ENCODE measurements at regions of chr12 and their contacts with region 1.

Region 1: GRCh38 chr12:19439059-19440018 is at the start of gene AEBP2:
- DNase-seq: peak; percentile 79 to 97 (median 94)
- ATAC-seq: peak; percentile 96
- H3K4me3 ChIP-seq: peak within 1 kb of the TSS; percentile 59
- H3K4me3 Mint-ChIP-seq: peak within 1 kb of the TSS; percentile 91 to 100 (median 99)
- H3K27ac ChIP-seq: peak within 1 kb of the TSS; percentile 88
- H3K27ac Mint-ChIP-seq: peak within 1 kb of the TSS; percentile 82 to 98 (median 96)
- H3K4me1 ChIP-seq: peaks cover 23 to 35% of the 10 kb centered on the region in 2 donors
- H3K4me1 Mint-ChIP-seq: peaks cover 19 to 52% (median 49%) of the 10 kb centered on the region in 7 donors
- H3K27me3 ChIP-seq: no peaks in the 10 kb centered on the region
- H3K27me3 Mint-ChIP-seq: no peaks in the 10 kb centered on the region
- total RNA-seq, gene AEBP2: 49.2 to 58.7 (median 57.5) TPM

Region 2: DNA sequence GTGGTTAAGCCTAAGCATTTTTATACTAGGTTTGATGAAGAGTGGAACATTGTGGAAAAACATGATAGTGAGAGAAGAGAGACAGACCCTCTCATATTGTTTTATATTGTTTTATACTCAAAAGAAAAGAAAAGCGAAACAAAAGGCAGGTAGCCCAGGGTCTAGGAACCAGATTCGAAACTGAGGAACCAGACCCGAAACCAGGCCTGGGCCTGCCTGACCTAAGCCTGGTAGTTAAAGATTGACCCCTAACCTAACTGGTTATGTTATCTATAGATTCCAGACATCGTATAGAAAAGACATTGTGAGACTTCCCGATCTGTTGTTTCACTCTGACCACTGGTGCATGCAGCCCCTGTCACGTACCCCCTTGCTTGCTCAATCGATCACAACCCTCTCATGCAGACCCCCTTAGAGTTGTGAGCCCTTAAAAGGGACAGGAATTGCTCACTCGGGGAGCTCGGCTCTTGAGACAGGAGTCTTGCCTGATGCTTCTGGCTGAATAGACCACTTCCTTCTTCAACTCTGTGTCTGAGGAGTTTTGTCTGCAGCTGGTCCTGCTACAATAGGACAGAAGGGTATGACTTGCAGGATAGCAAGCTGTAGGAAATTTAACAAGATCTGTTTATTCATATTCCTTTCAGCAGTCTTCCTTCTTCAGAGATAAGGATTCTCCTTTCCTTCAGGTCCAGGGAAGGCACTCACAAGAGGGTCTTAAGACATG is 457.0 kb before region 1 on chr12:
- CTCF ChIA-PET with region 1: no interaction called
- POLR2A ChIA-PET with region 1: no interaction called
- intact Hi-C with region 1: no loop called
- DNase-seq: no peak
- ATAC-seq: no peak
- H3K4me3 ChIP-seq: no peak overlapping the region
- H3K4me3 Mint-ChIP-seq: no peak overlapping the region
- H3K27ac ChIP-seq: no peak overlapping the region
- H3K27ac Mint-ChIP-seq: no peak overlapping the region
- H3K4me1 ChIP-seq: no peaks in the 10 kb centered on the region
- H3K4me1 Mint-ChIP-seq: no peaks in the 10 kb centered on the region
- H3K27me3 ChIP-seq: no peaks in the 10 kb centered on the region
- H3K27me3 Mint-ChIP-seq: no peaks in the 10 kb centered on the region

Region 3: GRCh38 chr12:19129486-19130223 is 309.7 kb before region 1 on chr12 and contains the start of gene PLEKHA5:
- CTCF ChIA-PET with region 1: no interaction called
- POLR2A ChIA-PET with region 1: no interaction called
- intact Hi-C with region 1: loop called in 1 of 2 experiments (anchors 10 kb)
- DNase-seq: peak in 6 of 9 donors; percentile 10 to 36 (median 19)
- ATAC-seq: peak; percentile 75
- H3K4me3 ChIP-seq: peak within 1 kb of the TSS; percentile 65
- H3K4me3 Mint-ChIP-seq: peak within 1 kb of the TSS; percentile 81 to 90 (median 87)
- H3K27ac ChIP-seq: no peak within 1 kb of the TSS
- H3K27ac Mint-ChIP-seq: peak within 1 kb of the TSS in 7 of 9 donors; percentile 2 to 61 (median 41)
- H3K4me1 ChIP-seq: peaks cover 0 to 7% of the 10 kb centered on the region in 2 donors
- H3K4me1 Mint-ChIP-seq: peaks cover 5 to 27% (median 21%) of the 10 kb centered on the region in 7 donors
- H3K27me3 ChIP-seq: no peaks in the 10 kb centered on the region
- H3K27me3 Mint-ChIP-seq: peaks cover 33 to 60% (median 51%) of the 10 kb centered on the region in 5 donors
- total RNA-seq, gene PLEKHA5: 0.82 to 5.3 (median 1.3) TPM

Region 4: GRCh38 chr12:19404242-19404920 is 35.0 kb before region 1 on chr12:
- CTCF ChIA-PET with region 1: no interaction called
- POLR2A ChIA-PET with region 1: no interaction called
- intact Hi-C with region 1: loop called (anchors 1 to 10 kb)
- DNase-seq: peak in 6 of 9 donors; percentile 16 to 46 (median 34)
- ATAC-seq: peak; percentile 85
- H3K4me3 ChIP-seq: peak overlapping the region; percentile 34
- H3K4me3 Mint-ChIP-seq: peak overlapping the region; percentile 55 to 83 (median 64)
- H3K27ac ChIP-seq: peak overlapping the region; percentile 33
- H3K27ac Mint-ChIP-seq: peak overlapping the region; percentile 75 to 93 (median 88)
- H3K4me1 ChIP-seq: peaks cover 5 to 19% of the 10 kb centered on the region in 2 donors
- H3K4me1 Mint-ChIP-seq: peaks cover 6 to 24% (median 16%) of the 10 kb centered on the region in 7 donors
- H3K27me3 ChIP-seq: no peaks in the 10 kb centered on the region
- H3K27me3 Mint-ChIP-seq: no peaks in the 10 kb centered on the region

Region 5: GRCh38 chr12:19421503-19422282 is 17.6 kb before region 1 on chr12:
- CTCF ChIA-PET with region 1: no interaction called
- POLR2A ChIA-PET with region 1: no interaction called
- intact Hi-C with region 1: no loop called
- DNase-seq: peak in 1 of 9 donors; percentile 9
- ATAC-seq: no peak
- H3K4me3 ChIP-seq: no peak overlapping the region
- H3K4me3 Mint-ChIP-seq: no peak overlapping the region
- H3K27ac ChIP-seq: no peak overlapping the region
- H3K27ac Mint-ChIP-seq: peak overlapping the region in 2 of 9 donors; percentile 36 to 84
- H3K4me1 ChIP-seq: no peaks in the 10 kb centered on the region
- H3K4me1 Mint-ChIP-seq: peaks cover 0 to 10% (median 5%) of the 10 kb centered on the region in 7 donors
- H3K27me3 ChIP-seq: no peaks in the 10 kb centered on the region
- H3K27me3 Mint-ChIP-seq: no peaks in the 10 kb centered on the region

Region 6: DNA sequence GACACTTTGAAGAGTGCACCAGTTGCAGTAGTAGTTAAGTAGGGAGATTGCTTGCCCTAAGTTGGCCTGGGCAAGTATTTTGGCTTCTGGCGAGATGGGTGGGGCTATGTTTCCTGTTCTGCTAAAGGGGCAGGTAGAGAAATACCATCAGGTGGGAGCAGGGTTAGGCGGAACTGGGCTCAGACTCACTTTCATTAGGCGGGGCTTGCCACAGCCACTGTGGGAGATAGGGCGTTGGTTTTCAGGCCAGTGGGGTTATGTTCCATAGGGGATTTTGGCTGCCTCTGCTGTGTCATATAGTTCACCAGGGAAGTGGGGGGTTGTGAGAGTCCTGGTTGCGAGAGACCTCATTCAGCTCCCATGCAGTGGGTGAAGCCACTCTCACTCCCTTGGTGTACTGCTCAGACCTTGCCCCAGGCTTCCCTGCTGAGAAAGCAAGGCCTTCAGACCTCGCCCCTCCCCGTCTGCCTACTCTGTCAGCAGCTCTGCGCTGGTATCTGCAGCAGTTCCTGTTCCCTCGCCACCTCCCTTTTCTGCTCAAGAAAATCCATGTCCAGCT is 43.3 kb after region 1 on chr12:
- CTCF ChIA-PET with region 1: no interaction called
- POLR2A ChIA-PET with region 1: no interaction called
- intact Hi-C with region 1: loop called in 1 of 2 experiments (anchors 5 kb)
- DNase-seq: peak in 2 of 9 donors; percentile 5 to 46
- ATAC-seq: peak; percentile 72
- H3K4me3 ChIP-seq: no peak overlapping the region
- H3K4me3 Mint-ChIP-seq: peak overlapping the region; percentile 6 to 59 (median 36)
- H3K27ac ChIP-seq: no peak overlapping the region
- H3K27ac Mint-ChIP-seq: peak overlapping the region in 8 of 9 donors; percentile 34 to 86 (median 70)
- H3K4me1 ChIP-seq: peaks cover 19 to 26% of the 10 kb centered on the region in 2 donors
- H3K4me1 Mint-ChIP-seq: peaks cover 41 to 78% (median 64%) of the 10 kb centered on the region in 7 donors
- H3K27me3 ChIP-seq: no peaks in the 10 kb centered on the region
- H3K27me3 Mint-ChIP-seq: no peaks in the 10 kb centered on the region

Region 7: GRCh38 chr12:19683178-19683927 is 244.0 kb after region 1 on chr12:
- CTCF ChIA-PET with region 1: no interaction called
- POLR2A ChIA-PET with region 1: no interaction called
- intact Hi-C with region 1: loop called in 1 of 2 experiments (anchors 2 kb)
- DNase-seq: no peak
- ATAC-seq: no peak
- H3K4me3 ChIP-seq: no peak overlapping the region
- H3K4me3 Mint-ChIP-seq: no peak overlapping the region
- H3K27ac ChIP-seq: no peak overlapping the region
- H3K27ac Mint-ChIP-seq: no peak overlapping the region
- H3K4me1 ChIP-seq: peaks cover 4 to 8% of the 10 kb centered on the region in 2 donors
- H3K4me1 Mint-ChIP-seq: peaks cover 10 to 35% (median 27%) of the 10 kb centered on the region in 7 donors
- H3K27me3 ChIP-seq: no peaks in the 10 kb centered on the region
- H3K27me3 Mint-ChIP-seq: peaks cover 0 to 19% (median 0%) of the 10 kb centered on the region in 5 donors